Activated CD8-positive, alpha-beta T cell treated with anti-CD3 and anti-CD28 coated beads for 36 hours (primary cell): ENCODE measurements at regions of chr1 and their contacts with region 1.

Region 1: DNA sequence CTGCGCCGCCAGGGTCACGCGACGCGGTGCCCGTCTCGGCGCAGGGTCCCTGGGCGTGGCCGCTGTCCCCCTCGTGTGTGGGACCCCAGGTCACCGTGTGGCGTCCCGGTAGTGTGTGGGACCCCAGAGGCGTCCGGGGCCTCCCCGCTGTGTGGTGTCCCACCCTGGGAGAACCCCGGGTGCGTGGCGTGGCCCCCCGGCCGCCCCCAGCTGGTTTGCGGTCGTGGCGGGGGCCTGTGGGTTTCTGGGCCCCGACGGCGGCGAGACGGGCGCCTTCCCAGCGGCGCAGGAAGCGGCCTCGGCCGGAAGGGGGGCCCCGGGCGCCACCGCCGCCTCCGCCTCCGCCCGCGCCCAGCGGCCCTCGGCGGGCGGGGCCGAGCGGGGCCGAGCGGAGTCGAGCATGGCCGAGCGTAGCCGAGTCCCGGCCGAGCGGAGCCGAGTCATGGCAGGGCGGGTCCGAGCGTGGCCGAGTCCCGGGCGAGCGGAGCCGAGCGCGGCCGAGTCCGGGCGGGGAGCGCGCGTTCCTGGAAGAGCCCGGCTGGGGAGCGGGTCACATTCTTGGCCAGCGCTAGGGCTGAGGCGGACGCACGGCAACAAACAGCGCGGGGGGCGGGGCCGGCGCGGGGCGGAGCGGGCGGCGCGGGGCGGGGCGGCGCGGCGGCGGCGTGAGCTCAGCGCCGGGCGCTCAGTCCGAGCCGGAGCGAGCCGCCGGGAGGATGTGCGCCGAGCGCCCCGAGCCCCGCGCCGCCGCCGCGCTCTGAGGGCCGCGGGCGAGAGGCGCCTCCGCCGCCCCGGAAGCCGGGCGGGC is 569 bp upstream of the SKI start:
- DNase-seq: peak; percentile 95
- ATAC-seq: peak; percentile 93
- H3K4me3 Mint-ChIP-seq: peak overlapping the region; percentile 54
- H3K27ac Mint-ChIP-seq: peak overlapping the region; percentile 57
- H3K4me1 Mint-ChIP-seq: peaks cover 12% of the 10 kb centered on the region
- H3K27me3 Mint-ChIP-seq: peaks cover 1% of the 10 kb centered on the region
- CTCF ChIP-seq: no peak

Region 2: GRCh38 chr1:2205191-2205952 is 22.2 kb before region 1 on chr1:
- CTCF ChIA-PET with region 1: no interaction called
- POLR2A ChIA-PET with region 1: interaction called, 15 read pairs
- intact Hi-C with region 1: no loop called
- DNase-seq: peak; percentile 95
- ATAC-seq: peak; percentile 91
- H3K4me3 Mint-ChIP-seq: peak overlapping the region; percentile 52
- H3K27ac Mint-ChIP-seq: no peak overlapping the region
- H3K4me1 Mint-ChIP-seq: peaks cover 2% of the 10 kb centered on the region
- H3K27me3 Mint-ChIP-seq: no peaks in the 10 kb centered on the region
- CTCF ChIP-seq: no peak

Region 3: DNA sequence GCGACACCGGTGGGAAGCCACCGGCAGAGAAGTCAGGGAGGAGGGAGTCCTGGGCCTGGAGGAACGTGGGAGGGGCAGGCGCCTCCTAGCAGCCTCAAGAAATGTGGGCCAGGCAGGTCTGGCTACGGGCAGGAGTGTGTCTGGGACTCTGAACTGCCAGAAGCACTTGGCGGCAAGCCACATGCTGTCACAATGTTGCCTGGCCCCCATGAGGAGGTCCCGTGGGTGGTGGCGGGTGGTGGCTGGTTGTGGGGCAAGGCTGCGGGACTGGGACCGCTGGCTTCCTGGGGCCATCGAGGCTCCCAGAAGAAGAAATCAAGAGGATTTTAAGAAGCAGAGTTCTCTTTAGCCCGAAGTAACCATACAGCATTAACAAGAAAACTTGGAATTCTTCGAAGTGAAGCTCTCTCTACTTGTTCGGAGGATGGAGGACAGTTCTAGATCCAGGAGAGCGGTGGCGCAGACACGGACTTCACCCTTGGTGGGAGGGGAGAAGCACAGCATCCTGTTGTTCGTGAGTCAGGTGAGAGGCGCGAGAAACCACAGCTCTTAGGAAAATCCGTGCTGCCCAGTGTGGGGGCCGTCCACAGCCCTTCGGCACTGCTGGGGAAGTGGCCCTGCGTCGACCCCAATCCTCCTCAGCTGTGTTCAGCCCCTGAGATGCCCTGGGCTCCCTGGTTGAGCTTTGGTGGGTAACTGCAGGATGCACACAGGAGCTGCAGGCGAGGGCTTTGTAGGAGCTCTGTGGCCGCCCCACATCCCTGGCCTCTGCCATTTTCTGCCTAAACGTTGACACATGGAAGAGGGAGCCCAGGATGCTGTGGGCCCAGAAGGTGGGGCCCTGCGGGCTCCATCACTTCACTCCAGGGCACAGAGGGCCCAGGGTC is 13.0 kb after region 1 on chr1:
- CTCF ChIA-PET with region 1: interaction called, 3 read pairs
- POLR2A ChIA-PET with region 1: interaction called, 14 read pairs
- intact Hi-C with region 1: no loop called
- DNase-seq: peak; percentile 62
- ATAC-seq: peak; percentile 38
- H3K4me3 Mint-ChIP-seq: peak overlapping the region; percentile 22
- H3K27ac Mint-ChIP-seq: peak overlapping the region; percentile 60
- H3K4me1 Mint-ChIP-seq: peaks cover 77% of the 10 kb centered on the region
- H3K27me3 Mint-ChIP-seq: no peaks in the 10 kb centered on the region
- CTCF ChIP-seq: no peak